Ascending aorta (tissue), 2 donors: ENCODE measurements at regions of chr20 and their contacts with region 1.

Region 1: GRCh38 chr20:49880177-49880576 is 35.2 kb downstream of the SPATA2 start:
- DNase-seq: no peak
- H3K4me3 ChIP-seq: peak overlapping the region in 1 of 2 donors; percentile 11
- H3K27ac ChIP-seq: peak overlapping the region; percentile 62 to 70
- H3K4me1 ChIP-seq: peaks cover 14 to 38% of the 10 kb centered on the region in 2 donors
- H3K27me3 ChIP-seq: no peaks in the 10 kb centered on the region
- CTCF ChIP-seq: no peak

Region 2: GRCh38 chr20:49865559-49865958 is 14.6 kb before region 1 on chr20:
- intact Hi-C with region 1: loop called (anchors 1 kb)
- DNase-seq: peak in 1 of 2 donors; percentile 66
- H3K4me3 ChIP-seq: no peak overlapping the region
- H3K27ac ChIP-seq: peak overlapping the region; percentile 51 to 76
- H3K4me1 ChIP-seq: peaks cover 12 to 35% of the 10 kb centered on the region in 2 donors
- H3K27me3 ChIP-seq: no peaks in the 10 kb centered on the region
- CTCF ChIP-seq: no peak

Region 3: GRCh38 chr20:50425085-50425484 is 544.9 kb after region 1 on chr20:
- intact Hi-C with region 1: no loop called
- DNase-seq: no peak
- H3K4me3 ChIP-seq: no peak overlapping the region
- H3K27ac ChIP-seq: no peak overlapping the region
- H3K4me1 ChIP-seq: peaks cover 13 to 27% of the 10 kb centered on the region in 2 donors
- H3K27me3 ChIP-seq: no peaks in the 10 kb centered on the region
- CTCF ChIP-seq: no peak